ENCODE measurements at regions of chr7 and their contacts with region 1.

Region 1: GRCh38 chr7:99398625-99399445 is 9.6 kb downstream of the PDAP1 start:
- DNase-seq: no peak
- H3K4me3 Mint-ChIP-seq: no peak overlapping the region
- H3K27ac Mint-ChIP-seq: peak overlapping the region; percentile 55
- H3K4me1 Mint-ChIP-seq: peaks cover 26% of the 10 kb centered on the region
- H3K27me3 Mint-ChIP-seq: no peaks in the 10 kb centered on the region

Region 2: DNA sequence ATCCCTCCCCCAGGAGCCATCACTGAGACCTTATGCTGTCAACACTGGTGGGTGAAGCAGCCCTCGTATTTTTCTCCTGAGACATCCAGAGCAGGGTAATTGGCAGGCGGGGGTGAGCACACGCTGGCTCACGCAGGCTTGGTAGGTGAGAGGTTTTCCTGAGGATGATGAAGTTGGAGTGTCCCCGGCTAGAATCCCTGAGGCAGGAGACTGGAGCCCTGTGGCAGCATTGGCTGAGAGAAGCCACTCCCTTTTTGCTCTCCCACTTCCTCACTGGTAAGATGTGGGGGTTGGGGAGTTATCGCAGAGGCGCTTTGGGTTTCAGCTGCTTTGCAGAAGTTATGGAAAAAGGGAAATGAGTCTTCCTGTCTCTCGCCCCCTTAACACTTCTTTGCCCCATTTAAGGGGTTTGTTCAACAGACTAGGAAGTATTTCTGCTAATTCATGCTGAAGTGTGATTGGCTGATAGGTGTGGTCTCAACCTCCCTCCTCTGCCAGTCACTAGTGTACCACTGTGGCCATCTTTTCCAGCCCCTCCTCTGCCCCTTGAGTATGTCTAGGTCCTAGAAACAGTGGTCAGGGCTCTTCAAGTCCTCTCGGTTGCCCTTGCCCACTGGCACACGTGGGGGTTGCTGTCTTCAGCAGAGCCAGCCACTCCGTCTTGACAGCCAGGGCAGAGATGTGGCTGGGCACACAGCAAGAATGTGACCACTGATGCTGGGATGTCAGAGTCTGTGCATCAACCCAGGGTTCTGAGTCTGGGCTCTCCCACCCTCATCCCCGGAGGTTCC is 18.6 kb before region 1 on chr7:
- CTCF ChIA-PET with region 1: no interaction called
- POLR2A ChIA-PET with region 1: interaction called, 160 read pairs
- DNase-seq: peak; percentile 54
- H3K4me3 Mint-ChIP-seq: peak overlapping the region; percentile 77
- H3K27ac Mint-ChIP-seq: peak overlapping the region; percentile 97
- H3K4me1 Mint-ChIP-seq: peaks cover 63% of the 10 kb centered on the region
- H3K27me3 Mint-ChIP-seq: no peaks in the 10 kb centered on the region

Measured in activated CD4-positive, alpha-beta memory T cell treated with anti-CD3 and anti-CD28 coated beads, Interleukin-2, amount 10 ng/mL, durations not matched to agents 7 days and 5 days (primary cell).